ENCODE measurements at regions of chr20 and their contacts with region 1.

Region 1: DNA sequence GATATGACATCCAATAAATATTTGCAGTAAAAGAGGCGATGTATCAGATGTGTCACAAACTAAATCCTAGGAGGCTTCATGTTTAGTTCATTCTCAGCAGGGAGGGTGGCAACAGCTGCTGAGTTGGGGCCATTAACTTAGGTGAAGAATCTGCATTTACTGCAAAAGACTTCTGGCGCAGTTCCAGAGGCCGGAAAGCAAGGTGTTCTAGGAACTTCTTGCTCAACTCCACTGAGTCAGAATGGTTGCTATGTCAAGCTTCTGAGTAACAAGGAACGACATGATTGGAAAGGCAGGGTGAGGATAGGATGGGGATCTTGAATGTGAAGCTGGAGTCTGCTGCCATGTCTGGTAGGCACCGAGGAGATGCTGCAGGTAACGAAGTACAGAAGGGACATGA is 11.7 kb downstream of the ADNP start:
- DNase-seq: peak; percentile 91
- H3K4me3 ChIP-seq: no peak overlapping the region
- H3K27ac ChIP-seq: peak overlapping the region; percentile 70
- H3K4me1 ChIP-seq: peaks cover 36% of the 10 kb centered on the region
- H3K27me3 ChIP-seq: no peaks in the 10 kb centered on the region
- CTCF ChIP-seq: no peak

Region 2: GRCh38 chr20:50784464-50784863 is 135.1 kb before region 1 on chr20:
- CTCF ChIA-PET with region 1: no interaction called
- dilution Hi-C with region 1: loop called (anchors 5 kb)
- in situ Hi-C with region 1: no loop called
- intact Hi-C with region 1: no loop called
- DNase-seq: no peak
- H3K4me3 ChIP-seq: no peak overlapping the region
- H3K27ac ChIP-seq: no peak overlapping the region
- H3K4me1 ChIP-seq: no peaks in the 10 kb centered on the region
- H3K27me3 ChIP-seq: no peaks in the 10 kb centered on the region
- CTCF ChIP-seq: no peak

Measured in mammary epithelial cell (primary cell).